Aorta (tissue), 5 donors: ENCODE measurements at regions of chr11 and their contacts with region 1.

Region 1: GRCh38 chr11:73177778-73178577 is 35.9 kb upstream of the FCHSD2 start:
- DNase-seq: peak; percentile 93 to 96
- ATAC-seq: peak; percentile 91
- H3K4me3 ChIP-seq: no peak overlapping the region
- H3K27ac ChIP-seq: peak overlapping the region; percentile 71 to 92
- H3K4me1 ChIP-seq: no peaks in the 10 kb centered on the region
- H3K27me3 ChIP-seq: no peaks in the 10 kb centered on the region

Region 2: GRCh38 chr11:72831513-72832300 is 346.3 kb before region 1 on chr11:
- intact Hi-C with region 1: loop called (anchors 1 to 2 kb)
- DNase-seq: peak; percentile 88 to 94
- ATAC-seq: peak; percentile 88
- H3K4me3 ChIP-seq: no peak overlapping the region
- H3K27ac ChIP-seq: peak overlapping the region; percentile 85 to 91
- H3K4me1 ChIP-seq: peaks cover 7 to 12% of the 10 kb centered on the region in 2 donors
- H3K27me3 ChIP-seq: no peaks in the 10 kb centered on the region

Region 3: GRCh38 chr11:72924568-72925190 is 253.3 kb before region 1 on chr11:
- intact Hi-C with region 1: loop called (anchors 5 kb)
- DNase-seq: no peak
- ATAC-seq: peak; percentile 81
- H3K4me3 ChIP-seq: no peak overlapping the region
- H3K27ac ChIP-seq: no peak overlapping the region
- H3K4me1 ChIP-seq: peaks cover 0 to 1% of the 10 kb centered on the region in 2 donors
- H3K27me3 ChIP-seq: no peaks in the 10 kb centered on the region

Region 4: GRCh38 chr11:73048446-73048845 is 129.5 kb before region 1 on chr11:
- intact Hi-C with region 1: no loop called
- DNase-seq: no peak
- ATAC-seq: no peak
- H3K4me3 ChIP-seq: no peak overlapping the region
- H3K27ac ChIP-seq: no peak overlapping the region
- H3K4me1 ChIP-seq: peaks cover 0 to 3% of the 10 kb centered on the region in 2 donors
- H3K27me3 ChIP-seq: no peaks in the 10 kb centered on the region

Region 5: DNA sequence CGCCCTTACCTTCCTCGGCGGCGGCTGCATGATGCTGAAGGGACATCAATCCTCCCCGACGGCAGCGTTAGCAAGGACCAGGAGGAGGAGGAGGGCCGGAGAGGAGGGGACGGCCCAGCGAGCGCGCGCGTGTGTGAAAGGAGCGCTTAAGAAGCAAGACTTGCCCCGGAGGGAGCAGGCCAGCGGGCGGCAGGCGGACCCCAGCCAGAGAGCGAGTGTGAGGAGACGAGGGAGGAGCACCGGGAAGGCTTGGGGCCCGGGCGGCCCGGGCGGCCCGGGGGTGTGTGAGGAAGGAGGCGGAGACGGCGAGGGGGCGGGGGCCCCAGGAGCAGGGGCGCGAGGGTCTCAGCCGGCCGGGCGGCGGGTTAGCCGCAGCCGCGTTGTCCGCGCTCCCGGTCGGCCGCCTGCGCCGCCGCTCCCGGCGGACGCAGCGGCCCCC is 36.1 kb before region 1 on chr11:
- intact Hi-C with region 1: loop called (anchors 1 to 5 kb)
- DNase-seq: peak; percentile 89 to 91
- ATAC-seq: peak; percentile 71
- H3K4me3 ChIP-seq: peak overlapping the region; percentile 85
- H3K27ac ChIP-seq: peak overlapping the region; percentile 12 to 42
- H3K4me1 ChIP-seq: peaks cover 1 to 3% of the 10 kb centered on the region in 2 donors
- H3K27me3 ChIP-seq: no peaks in the 10 kb centered on the region

Region 6: DNA sequence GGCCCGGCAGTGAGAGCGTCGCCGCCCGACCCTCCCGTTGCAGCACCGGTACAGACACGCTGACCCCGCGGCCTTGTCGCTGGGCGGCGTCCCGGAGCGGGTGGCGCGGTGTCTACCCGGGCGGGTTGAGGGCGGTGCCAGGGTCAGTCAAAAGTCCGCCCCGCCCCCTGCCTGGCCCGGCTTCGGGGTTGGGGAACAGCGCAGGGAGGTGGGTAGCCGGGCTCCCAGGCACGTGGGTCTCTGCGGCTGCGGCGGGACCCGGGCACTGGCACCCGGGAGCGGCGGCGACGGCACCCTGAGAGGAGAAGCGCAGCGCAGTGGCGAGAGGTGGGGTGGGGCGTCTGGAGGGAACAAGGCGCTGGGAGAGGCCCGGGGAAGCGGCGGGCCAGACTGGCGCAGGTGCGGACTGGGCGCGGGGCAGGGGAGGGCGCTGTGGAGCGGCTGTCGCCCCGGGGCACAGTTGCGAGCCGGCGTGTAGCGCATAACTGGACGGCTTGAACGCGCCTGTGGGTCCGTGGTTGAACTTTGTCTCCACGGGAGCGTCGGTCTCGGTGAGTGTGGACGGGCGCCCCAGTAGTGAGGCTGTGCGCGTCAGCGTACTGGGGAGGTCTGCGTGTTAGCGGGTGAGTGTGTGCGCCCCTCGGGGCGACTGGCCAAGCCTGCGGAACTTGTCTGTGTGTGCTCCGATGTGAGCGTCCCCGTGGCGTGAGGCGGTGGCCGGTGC is 40.3 kb after region 1 on chr11 and contains the start of gene P2RY2:
- intact Hi-C with region 1: no loop called
- DNase-seq: peak; percentile 86 to 92
- ATAC-seq: peak; percentile 79
- H3K4me3 ChIP-seq: peak within 1 kb of the TSS; percentile 23 to 37
- H3K27ac ChIP-seq: no peak within 1 kb of the TSS
- H3K4me1 ChIP-seq: no peaks in the 10 kb centered on the region
- H3K27me3 ChIP-seq: no peaks in the 10 kb centered on the region
- total RNA-seq, gene P2RY2: 2.9 to 3.9 TPM